Naive thymus-derived CD4-positive, alpha-beta T cell (primary cell): ENCODE measurements at regions of chr19 and their contacts with region 1.

Region 1: DNA sequence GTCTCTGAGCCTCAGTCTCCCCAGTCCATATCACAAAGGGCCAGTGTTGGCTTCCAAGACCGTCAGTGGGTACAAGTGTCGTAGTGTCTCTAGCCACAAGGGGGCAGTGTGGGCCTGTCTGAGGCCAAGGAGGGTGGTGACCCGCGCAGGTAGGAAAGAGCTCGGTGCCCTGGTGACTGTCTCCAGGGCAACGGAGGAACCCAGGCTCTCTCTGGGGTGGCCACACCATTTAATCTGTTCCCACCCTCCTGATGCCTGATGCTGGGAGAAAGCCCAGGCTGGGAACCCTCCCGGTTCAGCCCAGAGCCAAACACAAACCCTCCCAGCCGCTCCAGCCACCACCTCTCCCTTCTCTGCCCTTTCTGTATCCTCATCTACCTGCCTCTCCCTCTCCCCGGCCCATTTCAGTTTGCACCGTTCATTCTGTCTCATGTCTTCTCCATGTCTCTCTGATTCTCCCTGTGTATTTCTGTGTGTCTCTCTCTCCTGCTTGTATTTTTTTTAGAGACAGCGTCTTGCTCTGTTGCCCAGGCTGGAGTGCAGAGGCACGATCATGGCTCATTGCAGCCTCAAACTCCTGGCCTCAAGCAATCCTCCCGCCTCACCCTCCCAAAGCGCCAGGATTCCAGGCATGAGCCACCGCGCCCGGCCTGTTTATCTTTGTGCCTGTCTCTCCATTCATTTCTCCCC is 17.5 kb upstream of the MEIS3 start:
- DNase-seq: peak; percentile 67 to 91 (median 79)
- ATAC-seq: peak; percentile 98
- H3K4me3 ChIP-seq: no peak overlapping the region
- H3K4me3 Mint-ChIP-seq: peak overlapping the region in 8 of 10 donors; percentile 17 to 72 (median 36)
- H3K27ac ChIP-seq: no peak overlapping the region
- H3K27ac Mint-ChIP-seq: peak overlapping the region in 6 of 9 donors; percentile 12 to 87 (median 55)
- H3K4me1 ChIP-seq: no peaks in the 10 kb centered on the region
- H3K4me1 Mint-ChIP-seq: peaks cover 18 to 32% (median 20%) of the 10 kb centered on the region in 7 donors
- H3K27me3 ChIP-seq: no peaks in the 10 kb centered on the region
- H3K27me3 Mint-ChIP-seq: peaks cover 21 to 55% (median 45%) of the 10 kb centered on the region in 5 donors

Region 2: DNA sequence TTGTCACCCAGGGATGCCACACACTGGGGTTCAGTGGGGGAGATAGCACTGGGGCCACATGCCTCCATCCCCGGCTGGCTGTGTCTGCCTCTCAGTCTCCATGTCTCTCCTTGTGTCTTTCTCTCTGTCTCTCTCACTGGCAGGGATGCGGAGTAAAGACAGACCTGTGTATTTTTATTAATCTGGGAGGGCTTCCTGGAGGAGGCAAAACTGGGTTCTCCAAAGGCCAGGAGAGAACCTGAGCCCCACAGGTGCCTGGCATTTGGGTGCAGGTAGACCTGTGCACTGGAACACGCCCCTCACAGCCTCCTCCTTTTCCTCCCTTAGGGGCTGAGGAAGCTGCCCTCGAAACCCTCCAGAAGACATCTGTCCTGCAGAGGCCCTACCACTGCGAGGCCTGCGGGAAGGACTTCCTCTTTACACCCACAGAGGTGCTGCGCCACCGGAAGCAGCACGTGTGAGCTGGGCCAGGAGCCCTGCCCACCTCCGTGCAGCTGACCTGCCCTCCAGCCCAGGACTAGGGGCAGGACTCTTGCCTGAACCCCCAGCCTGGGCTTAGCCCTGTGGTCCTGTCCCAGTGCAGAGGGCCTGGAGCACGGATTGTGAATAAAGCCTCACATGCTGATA is 55.1 kb before region 1 on chr19:
- CTCF ChIA-PET with region 1: no interaction called
- POLR2A ChIA-PET with region 1: no interaction called
- intact Hi-C with region 1: no loop called
- DNase-seq: peak in 1 of 9 donors; percentile 24
- ATAC-seq: peak; percentile 71
- H3K4me3 ChIP-seq: no peak overlapping the region
- H3K4me3 Mint-ChIP-seq: peak overlapping the region in 2 of 10 donors; percentile 20 to 24
- H3K27ac ChIP-seq: peak overlapping the region; percentile 47
- H3K27ac Mint-ChIP-seq: peak overlapping the region in 8 of 9 donors; percentile 63 to 85 (median 78)
- H3K4me1 ChIP-seq: peaks cover 9 to 19% of the 10 kb centered on the region in 2 donors
- H3K4me1 Mint-ChIP-seq: peaks cover 13 to 20% (median 17%) of the 10 kb centered on the region in 7 donors
- H3K27me3 ChIP-seq: no peaks in the 10 kb centered on the region
- H3K27me3 Mint-ChIP-seq: no peaks in the 10 kb centered on the region

Region 3: DNA sequence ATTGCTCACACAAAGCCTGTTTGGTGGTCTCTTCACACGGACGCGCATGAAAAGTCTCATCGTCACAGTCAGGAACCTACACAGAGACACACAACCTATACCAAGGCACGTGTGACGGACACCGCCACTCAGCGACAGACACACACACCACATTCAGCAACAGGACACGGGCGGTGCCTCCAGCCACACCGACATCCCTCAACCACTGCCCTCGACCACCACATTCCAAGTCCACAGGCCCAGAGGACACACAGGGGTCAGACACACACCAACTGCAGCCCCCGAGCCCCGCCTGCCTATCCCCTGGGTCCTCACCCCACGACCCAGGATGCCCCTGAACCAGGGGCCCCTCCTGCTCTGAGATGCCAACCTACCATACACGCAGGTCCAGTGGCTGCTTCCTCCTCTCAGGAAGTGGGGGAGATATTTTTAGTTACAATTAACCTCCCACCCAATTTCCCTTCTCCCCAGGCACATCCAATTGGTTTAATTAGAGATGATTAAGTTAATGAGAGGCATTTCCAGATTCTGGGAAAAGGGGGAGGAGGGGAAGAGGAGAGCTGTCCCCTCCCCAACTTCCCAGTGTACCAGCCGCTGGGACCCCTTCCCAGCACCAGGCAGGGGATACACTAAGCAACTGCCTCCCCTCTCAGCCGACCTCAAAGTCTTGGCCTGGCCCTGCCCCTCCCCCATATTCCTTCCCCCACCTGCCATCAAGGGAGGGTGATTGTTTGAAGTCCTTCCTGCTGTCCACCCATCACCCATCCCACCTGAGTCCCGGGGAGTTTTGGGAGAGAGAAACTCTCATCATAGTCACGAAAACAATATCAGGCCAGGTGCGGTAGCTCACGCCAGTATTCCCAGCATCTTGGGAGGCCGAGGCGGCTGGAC is 37.9 kb before region 1 on chr19:
- CTCF ChIA-PET with region 1: no interaction called
- POLR2A ChIA-PET with region 1: no interaction called
- intact Hi-C with region 1: no loop called
- DNase-seq: no peak
- ATAC-seq: no peak
- H3K4me3 ChIP-seq: no peak overlapping the region
- H3K4me3 Mint-ChIP-seq: no peak overlapping the region
- H3K27ac ChIP-seq: no peak overlapping the region
- H3K27ac Mint-ChIP-seq: peak overlapping the region in 1 of 9 donors; percentile 26
- H3K4me1 ChIP-seq: no peaks in the 10 kb centered on the region
- H3K4me1 Mint-ChIP-seq: peaks cover 0 to 1% (median 0%) of the 10 kb centered on the region in 7 donors
- H3K27me3 ChIP-seq: no peaks in the 10 kb centered on the region
- H3K27me3 Mint-ChIP-seq: peaks cover 12 to 23% (median 15%) of the 10 kb centered on the region in 5 donors

Region 4: GRCh38 chr19:47483800-47484690 is 47.2 kb after region 1 on chr19 and contains the start of gene KPTN:
- CTCF ChIA-PET with region 1: interaction called, 6 read pairs
- POLR2A ChIA-PET with region 1: no interaction called
- intact Hi-C with region 1: loop called in 1 of 2 experiments (anchors 1 kb)
- DNase-seq: peak; percentile 85 to 92 (median 88)
- ATAC-seq: peak; percentile 91
- H3K4me3 ChIP-seq: peak within 1 kb of the TSS; percentile 74
- H3K4me3 Mint-ChIP-seq: peak within 1 kb of the TSS; percentile 83 to 99 (median 96)
- H3K27ac ChIP-seq: peak within 1 kb of the TSS; percentile 96
- H3K27ac Mint-ChIP-seq: peak within 1 kb of the TSS; percentile 94 to 99 (median 97)
- H3K4me1 ChIP-seq: peaks cover 18% of the 10 kb centered on the region in 2 donors
- H3K4me1 Mint-ChIP-seq: peaks cover 22 to 39% (median 30%) of the 10 kb centered on the region in 7 donors
- H3K27me3 ChIP-seq: no peaks in the 10 kb centered on the region
- H3K27me3 Mint-ChIP-seq: peaks cover 0 to 4% (median 0%) of the 10 kb centered on the region in 5 donors
- total RNA-seq, gene KPTN: 5.1 to 9.2 (median 6.7) TPM

Region 5: GRCh38 chr19:47697863-47698609 is 261.2 kb after region 1 on chr19:
- CTCF ChIA-PET with region 1: interaction called, 117 read pairs
- POLR2A ChIA-PET with region 1: no interaction called
- intact Hi-C with region 1: loop called in 1 of 2 experiments (anchors 1 kb)
- DNase-seq: peak; percentile 10 to 59 (median 41)
- ATAC-seq: peak; percentile 76
- H3K4me3 ChIP-seq: no peak overlapping the region
- H3K4me3 Mint-ChIP-seq: no peak overlapping the region
- H3K27ac ChIP-seq: no peak overlapping the region
- H3K27ac Mint-ChIP-seq: peak overlapping the region in 2 of 9 donors; percentile 9 to 12
- H3K4me1 ChIP-seq: no peaks in the 10 kb centered on the region
- H3K4me1 Mint-ChIP-seq: peaks cover 0 to 6% (median 3%) of the 10 kb centered on the region in 7 donors
- H3K27me3 ChIP-seq: no peaks in the 10 kb centered on the region
- H3K27me3 Mint-ChIP-seq: no peaks in the 10 kb centered on the region

Region 6: DNA sequence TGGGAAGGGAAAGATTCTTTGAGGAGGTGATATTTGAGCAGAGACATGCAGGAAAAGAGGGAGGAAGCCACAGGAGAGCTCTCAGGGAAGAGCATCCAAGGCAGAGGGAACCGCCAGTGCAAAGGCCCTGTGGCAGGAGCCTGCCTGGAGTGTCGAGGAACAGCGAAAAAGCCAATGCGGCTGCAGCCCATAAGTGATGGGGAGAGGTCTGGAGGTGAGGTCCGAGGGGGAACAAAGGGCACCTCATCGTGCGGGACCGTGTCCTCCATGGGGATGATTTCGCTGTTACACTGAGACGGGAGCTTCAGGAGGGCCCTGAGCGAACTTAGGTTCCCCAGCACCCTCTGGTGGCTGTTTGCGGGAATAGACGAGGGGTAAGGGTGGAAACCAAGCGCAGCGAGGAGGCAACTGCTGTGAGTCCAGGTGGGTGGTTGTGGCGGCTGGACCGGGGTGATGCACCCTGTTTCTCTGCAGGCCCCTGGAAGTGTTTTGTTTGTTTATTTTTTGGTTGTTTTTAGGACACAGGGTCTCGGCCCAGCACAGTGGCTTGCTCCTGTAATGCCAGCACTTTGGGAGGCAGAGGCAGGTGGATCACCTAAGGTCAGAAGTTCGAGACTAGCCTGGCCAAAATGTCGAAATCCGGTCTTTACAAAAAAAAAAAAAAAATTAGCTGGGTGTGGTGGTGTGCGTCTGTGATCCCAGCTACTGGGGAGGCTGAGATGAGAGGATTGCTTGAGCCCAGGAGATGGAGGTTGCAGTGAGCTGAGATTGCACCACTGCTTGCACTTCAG is 270.5 kb after region 1 on chr19:
- CTCF ChIA-PET with region 1: interaction called, 117 read pairs
- POLR2A ChIA-PET with region 1: no interaction called
- intact Hi-C with region 1: loop called (anchors 1 kb)
- DNase-seq: peak; percentile 48 to 75 (median 66)
- ATAC-seq: peak; percentile 88
- H3K4me3 ChIP-seq: no peak overlapping the region
- H3K4me3 Mint-ChIP-seq: peak overlapping the region in 1 of 10 donors; percentile 5
- H3K27ac ChIP-seq: no peak overlapping the region
- H3K27ac Mint-ChIP-seq: peak overlapping the region in 1 of 9 donors; percentile 70
- H3K4me1 ChIP-seq: no peaks in the 10 kb centered on the region
- H3K4me1 Mint-ChIP-seq: peaks cover 0 to 9% (median 3%) of the 10 kb centered on the region in 7 donors
- H3K27me3 ChIP-seq: no peaks in the 10 kb centered on the region
- H3K27me3 Mint-ChIP-seq: peaks cover 7 to 32% (median 19%) of the 10 kb centered on the region in 5 donors